Sigmoid colon (tissue), 7 donors: ENCODE measurements at regions of chr11 and their contacts with region 1.

Region 1: GRCh38 chr11:125568970-125569914 is at the start of gene EI24:
- DNase-seq: peak; percentile 94
- H3K4me3 ChIP-seq: peak within 1 kb of the TSS; percentile 74 to 97 (median 88)
- H3K27ac ChIP-seq: peak within 1 kb of the TSS; percentile 86 to 94 (median 86)
- H3K4me1 ChIP-seq: peaks cover 0 to 20% (median 11%) of the 10 kb centered on the region in 4 donors
- H3K27me3 ChIP-seq: no peaks in the 10 kb centered on the region
- CTCF ChIP-seq: peak; percentile 67 to 80 (median 71)
- EP300 ChIP-seq: no peak
- POLR2A ChIP-seq: no peak
- total RNA-seq, gene EI24: 74.5 to 109 (median 86.6) TPM

Region 2: DNA sequence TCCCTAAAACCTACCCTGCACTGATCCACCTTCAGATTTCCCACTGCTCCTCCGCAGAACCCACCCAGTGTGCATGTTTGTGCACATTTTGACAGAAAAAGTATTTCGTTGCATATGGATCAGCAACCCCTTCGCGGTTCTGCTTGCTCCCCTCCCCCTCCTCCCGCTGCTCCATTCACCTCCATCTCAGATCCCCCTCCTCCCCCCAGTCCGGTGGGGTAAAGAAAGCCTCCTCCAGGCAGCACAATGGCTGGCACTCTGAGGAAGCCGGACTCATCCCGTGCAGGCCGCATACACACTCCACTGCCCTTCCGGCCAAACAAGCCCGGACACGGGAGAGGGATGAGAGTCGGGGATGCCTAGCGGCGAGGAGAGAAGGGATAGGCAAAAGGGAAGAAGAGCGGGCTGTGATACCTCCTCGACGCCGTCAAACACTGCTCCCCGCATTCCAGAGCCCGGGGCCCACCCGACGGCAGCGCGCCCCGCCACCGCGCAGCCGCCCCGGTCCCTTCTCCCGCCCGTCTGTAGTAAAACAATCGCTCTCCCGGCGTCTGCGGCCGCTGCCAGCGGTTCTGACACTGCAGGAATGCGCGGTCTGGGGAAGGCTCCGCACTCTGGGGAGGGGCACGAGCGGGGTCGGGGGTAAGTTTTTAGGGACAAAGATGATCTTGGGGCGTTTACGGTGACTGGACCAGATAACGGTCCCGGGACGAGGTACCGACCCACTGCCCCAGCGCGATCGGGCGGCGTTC is 74.1 kb before region 1 on chr11:
- intact Hi-C with region 1: loop called (anchors 1 kb)
- DNase-seq: peak; percentile 77
- H3K4me3 ChIP-seq: peak overlapping the region; percentile 58 to 84 (median 70)
- H3K27ac ChIP-seq: peak overlapping the region; percentile 83 to 90 (median 86)
- H3K4me1 ChIP-seq: peaks cover 0 to 13% (median 12%) of the 10 kb centered on the region in 4 donors
- H3K27me3 ChIP-seq: no peaks in the 10 kb centered on the region
- CTCF ChIP-seq: no peak
- EP300 ChIP-seq: no peak
- POLR2A ChIP-seq: no peak

Region 3: GRCh38 chr11:125874556-125875124 is 305.4 kb after region 1 on chr11:
- intact Hi-C with region 1: loop called (anchors 10 kb)
- DNase-seq: peak; percentile 69
- H3K4me3 ChIP-seq: no peak overlapping the region
- H3K27ac ChIP-seq: no peak overlapping the region
- H3K4me1 ChIP-seq: no peaks in the 10 kb centered on the region
- H3K27me3 ChIP-seq: no peaks in the 10 kb centered on the region
- CTCF ChIP-seq: peak; percentile 60 to 74 (median 65)
- EP300 ChIP-seq: no peak
- POLR2A ChIP-seq: no peak